Activated T-helper 1 cell treated with anti-CD3 and anti-CD28 coated beads, Interleukin-12 subunit alpha, Interleukin-12 subunit beta, Interleukin-2, Interleukin-4 antibody, amounts not matched to agents 30 ng/mL and 10 ng/mL and 1 ng/mL, durations not matched to agents 14 hours and 24 hours and 36 hours (primary cell): ENCODE measurements at regions of chr17 and their contacts with region 1.

Region 1: DNA sequence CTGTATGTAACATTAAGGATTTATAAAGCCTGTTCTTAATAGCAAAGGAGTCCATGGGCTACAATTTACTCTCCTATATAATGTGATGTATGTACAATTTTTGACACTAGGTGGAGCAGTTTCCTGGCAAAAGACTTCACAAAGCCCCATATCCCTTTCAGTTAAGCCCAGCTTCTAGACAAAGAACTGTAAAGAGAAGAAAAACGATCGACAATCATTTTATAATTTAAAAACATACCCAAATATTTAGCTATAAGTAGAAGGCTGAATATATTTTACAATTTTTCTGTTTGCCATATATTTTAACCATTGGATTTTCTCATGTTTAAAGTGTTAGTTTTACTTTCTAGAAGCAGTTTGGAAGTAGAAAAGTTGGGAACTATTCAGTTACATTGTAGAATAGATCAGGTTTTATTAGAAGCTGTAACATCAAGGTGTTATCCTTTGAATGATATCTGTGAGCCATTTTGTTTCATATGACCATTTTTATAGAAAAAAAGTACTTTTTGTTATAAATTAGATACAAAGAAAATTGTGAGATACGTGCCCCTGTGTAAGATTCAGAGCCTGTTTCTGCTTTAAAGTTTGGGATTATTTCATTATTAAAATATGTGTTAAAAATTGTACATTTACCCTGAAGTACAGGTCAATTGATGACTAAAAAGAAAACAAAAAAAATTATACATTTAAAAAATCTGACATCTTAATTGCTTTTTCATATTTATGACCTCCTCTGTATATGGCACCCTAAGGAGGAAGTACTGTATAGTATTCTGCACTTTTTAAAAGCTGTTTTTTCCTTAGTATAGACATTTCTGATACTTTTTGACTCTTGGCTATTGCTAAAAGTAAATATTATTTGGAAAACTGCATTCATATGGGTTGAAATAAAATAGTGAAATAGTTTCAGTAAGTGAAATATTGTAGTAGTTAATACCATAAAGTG is 46.3 kb downstream of the VMP1 start:
- DNase-seq: peak; percentile 26
- H3K4me3 Mint-ChIP-seq: peak overlapping the region; percentile 80
- H3K27ac Mint-ChIP-seq: peak overlapping the region; percentile 93
- H3K4me1 Mint-ChIP-seq: peaks cover 64% of the 10 kb centered on the region
- H3K27me3 Mint-ChIP-seq: no peaks in the 10 kb centered on the region

Region 2: GRCh38 chr17:59829217-59830006 is 75.6 kb after region 1 on chr17:
- intact Hi-C with region 1: loop called (anchors 1 kb)
- DNase-seq: peak; percentile 66
- H3K4me3 Mint-ChIP-seq: peak overlapping the region; percentile 90
- H3K27ac Mint-ChIP-seq: peak overlapping the region; percentile 100
- H3K4me1 Mint-ChIP-seq: peaks cover 79% of the 10 kb centered on the region
- H3K27me3 Mint-ChIP-seq: no peaks in the 10 kb centered on the region

Region 3: DNA sequence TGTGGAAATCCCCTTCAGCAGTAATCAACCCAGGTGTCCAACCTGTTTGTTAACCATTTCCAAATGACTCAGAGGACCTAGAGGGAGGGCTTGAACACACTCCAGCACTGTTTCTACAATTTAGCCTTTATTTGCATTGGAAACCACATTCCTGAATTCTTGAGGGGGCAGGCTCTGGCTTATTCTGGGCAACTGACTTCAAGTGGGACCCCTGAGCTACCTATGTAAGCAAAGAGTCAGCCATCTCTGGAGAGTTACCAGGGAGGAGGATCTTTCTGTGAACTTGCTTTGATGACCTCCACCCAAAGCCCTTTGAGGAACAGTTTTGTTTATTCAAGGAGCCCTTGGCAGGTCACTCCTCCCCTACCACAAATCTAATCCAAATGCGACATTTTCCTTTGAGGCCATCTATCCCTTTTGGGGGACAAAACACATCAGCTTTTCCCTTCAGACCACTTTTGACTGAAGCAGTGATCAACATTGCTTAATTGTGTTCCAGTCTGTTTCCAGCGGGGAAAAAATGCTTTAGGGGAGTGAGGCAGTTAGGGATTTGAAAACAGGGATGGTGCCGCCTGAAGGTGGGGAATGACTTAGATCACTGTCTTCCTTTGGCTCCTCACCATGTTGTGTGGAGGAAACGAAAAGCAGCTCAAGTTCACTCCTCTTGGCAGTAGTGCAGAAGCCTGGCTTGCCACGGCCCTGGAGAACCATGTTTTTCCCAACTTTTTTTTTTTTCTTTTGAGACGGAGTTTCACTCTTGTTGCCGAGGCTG is 92.8 kb after region 1 on chr17:
- intact Hi-C with region 1: loop called (anchors 1 kb)
- DNase-seq: peak; percentile 51
- H3K4me3 Mint-ChIP-seq: peak overlapping the region; percentile 50
- H3K27ac Mint-ChIP-seq: peak overlapping the region; percentile 94
- H3K4me1 Mint-ChIP-seq: peaks cover 68% of the 10 kb centered on the region
- H3K27me3 Mint-ChIP-seq: no peaks in the 10 kb centered on the region

Region 4: GRCh38 chr17:59892924-59893676 is 139.3 kb after region 1 on chr17 and contains the starts of genes RPS6KB1 and TUBD1:
- intact Hi-C with region 1: loop called (anchors 1 kb)
- DNase-seq: peak; percentile 98
- H3K4me3 Mint-ChIP-seq: peak within 1 kb of the TSS; percentile 100
- H3K27ac Mint-ChIP-seq: peak within 1 kb of the TSS; percentile 99
- H3K4me1 Mint-ChIP-seq: peaks cover 58% of the 10 kb centered on the region
- H3K27me3 Mint-ChIP-seq: peaks cover 3% of the 10 kb centered on the region
- total RNA-seq, gene RPS6KB1: 67.6 and 82.7 TPM in 2 replicates
- total RNA-seq, gene TUBD1: 12.3 and 13.2 TPM in 2 replicates

Region 5: GRCh38 chr17:59964482-59965328 is 210.9 kb after region 1 on chr17 and contains the start of gene RNFT1:
- intact Hi-C with region 1: loop called (anchors 5 kb)
- DNase-seq: peak; percentile 86
- H3K4me3 Mint-ChIP-seq: peak within 1 kb of the TSS; percentile 84
- H3K27ac Mint-ChIP-seq: peak within 1 kb of the TSS; percentile 94
- H3K4me1 Mint-ChIP-seq: peaks cover 25% of the 10 kb centered on the region
- H3K27me3 Mint-ChIP-seq: peaks cover 12% of the 10 kb centered on the region
- total RNA-seq, gene RNFT1: 32.2 and 35.5 TPM in 2 replicates